Caco-2 (cell line): ENCODE measurements at regions of chr2 and their contacts with region 1.

Region 1: GRCh38 chr2:188512456-188512855 is 220.8 kb downstream of the GULP1 start:
- DNase-seq: peak in 1 of 2 experiments; percentile 17
- H3K4me3 ChIP-seq: no peak overlapping the region
- H3K4me3 Mint-ChIP-seq: no peak overlapping the region
- H3K27ac Mint-ChIP-seq: no peak overlapping the region
- H3K4me1 ChIP-seq: no peaks in the 10 kb centered on the region
- H3K4me1 Mint-ChIP-seq: no peaks in the 10 kb centered on the region
- H3K27me3 ChIP-seq: no peaks in the 10 kb centered on the region
- H3K27me3 Mint-ChIP-seq: no peaks in the 10 kb centered on the region
- CTCF ChIP-seq: peak; percentile 51 to 63

Region 2: GRCh38 chr2:187581125-187581896 is 931.1 kb before region 1 on chr2:
- CTCF ChIA-PET with region 1: interaction called, 3 read pairs
- POLR2A ChIA-PET with region 1: no interaction called
- intact Hi-C with region 1: loop called (anchors 1 kb)
- DNase-seq: peak in 1 of 2 experiments; percentile 62
- H3K4me3 ChIP-seq: no peak overlapping the region
- H3K4me3 Mint-ChIP-seq: no peak overlapping the region
- H3K27ac Mint-ChIP-seq: no peak overlapping the region
- H3K4me1 ChIP-seq: peaks cover 17% of the 10 kb centered on the region
- H3K4me1 Mint-ChIP-seq: no peaks in the 10 kb centered on the region
- H3K27me3 ChIP-seq: no peaks in the 10 kb centered on the region
- H3K27me3 Mint-ChIP-seq: peaks cover 4% of the 10 kb centered on the region
- CTCF ChIP-seq: peak; percentile 64 to 71

Region 3: DNA sequence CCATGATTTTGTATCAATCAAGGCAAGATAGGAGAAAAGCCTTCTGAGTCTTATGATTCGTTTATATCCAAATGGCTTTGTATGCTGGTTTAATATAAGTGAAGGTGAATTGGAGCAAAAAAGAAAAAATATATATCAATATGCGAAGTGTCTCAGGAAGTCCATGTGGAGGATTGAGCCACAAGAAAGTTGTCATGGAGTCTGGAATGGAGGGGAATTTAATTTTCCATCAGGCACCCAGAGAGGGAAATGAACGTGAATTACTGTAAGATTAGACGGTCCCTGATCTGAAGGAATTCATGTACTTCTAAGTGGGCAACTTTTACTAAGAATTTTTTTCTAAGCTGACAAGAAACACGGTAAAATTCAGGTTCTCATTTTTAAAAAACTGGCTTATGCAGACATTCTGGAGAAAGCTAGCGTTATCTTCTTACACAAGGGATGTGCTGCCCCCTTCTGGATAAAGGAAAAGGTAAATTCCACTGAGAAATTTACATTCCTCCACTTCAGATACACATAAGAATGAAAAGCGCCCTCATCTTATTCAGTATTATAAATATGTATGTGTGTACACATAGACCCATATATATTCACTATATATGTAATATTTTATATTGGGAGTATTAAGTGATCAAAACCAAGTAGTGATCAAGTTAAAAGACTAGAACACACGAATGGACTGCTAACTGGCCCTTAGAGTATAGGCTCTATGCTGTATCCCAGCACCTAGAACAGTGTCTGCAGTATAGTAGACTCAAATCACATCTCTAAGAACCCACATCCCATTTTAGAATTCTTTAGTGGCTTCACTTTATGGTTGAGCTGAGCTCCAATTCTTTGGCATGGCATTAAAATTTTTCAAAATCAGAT is 669.2 kb before region 1 on chr2:
- CTCF ChIA-PET with region 1: no interaction called
- POLR2A ChIA-PET with region 1: no interaction called
- intact Hi-C with region 1: loop called (anchors 2 kb)
- DNase-seq: peak in 1 of 2 experiments; percentile 65
- H3K4me3 ChIP-seq: no peak overlapping the region
- H3K4me3 Mint-ChIP-seq: no peak overlapping the region
- H3K27ac Mint-ChIP-seq: no peak overlapping the region
- H3K4me1 ChIP-seq: no peaks in the 10 kb centered on the region
- H3K4me1 Mint-ChIP-seq: peaks cover 7% of the 10 kb centered on the region
- H3K27me3 ChIP-seq: no peaks in the 10 kb centered on the region
- H3K27me3 Mint-ChIP-seq: no peaks in the 10 kb centered on the region
- CTCF ChIP-seq: peak; percentile 67 to 69

Region 4: DNA sequence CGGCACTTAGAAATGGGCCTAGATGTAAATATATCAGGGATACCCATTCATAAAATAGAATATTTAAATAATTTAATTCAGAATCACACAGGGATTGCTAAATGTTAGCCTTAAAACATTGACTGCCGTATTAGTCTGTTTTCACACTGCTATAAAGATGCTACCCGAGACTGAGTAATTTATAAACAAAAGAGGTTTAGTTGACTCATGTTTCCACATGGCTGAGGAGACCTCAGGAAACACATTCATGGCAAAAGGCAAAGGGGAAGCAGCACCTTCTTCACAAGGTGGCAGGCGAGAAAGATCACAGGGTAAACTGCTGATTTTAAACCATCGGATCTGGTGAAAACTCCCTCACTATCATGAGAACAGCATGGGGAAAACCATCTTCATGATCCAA is 444.4 kb before region 1 on chr2:
- CTCF ChIA-PET with region 1: no interaction called
- POLR2A ChIA-PET with region 1: no interaction called
- intact Hi-C with region 1: loop called (anchors 5 kb)
- DNase-seq: no peak
- H3K4me3 ChIP-seq: no peak overlapping the region
- H3K4me3 Mint-ChIP-seq: no peak overlapping the region
- H3K27ac Mint-ChIP-seq: no peak overlapping the region
- H3K4me1 ChIP-seq: no peaks in the 10 kb centered on the region
- H3K4me1 Mint-ChIP-seq: no peaks in the 10 kb centered on the region
- H3K27me3 ChIP-seq: no peaks in the 10 kb centered on the region
- H3K27me3 Mint-ChIP-seq: peaks cover 4% of the 10 kb centered on the region
- CTCF ChIP-seq: no peak

Region 5: DNA sequence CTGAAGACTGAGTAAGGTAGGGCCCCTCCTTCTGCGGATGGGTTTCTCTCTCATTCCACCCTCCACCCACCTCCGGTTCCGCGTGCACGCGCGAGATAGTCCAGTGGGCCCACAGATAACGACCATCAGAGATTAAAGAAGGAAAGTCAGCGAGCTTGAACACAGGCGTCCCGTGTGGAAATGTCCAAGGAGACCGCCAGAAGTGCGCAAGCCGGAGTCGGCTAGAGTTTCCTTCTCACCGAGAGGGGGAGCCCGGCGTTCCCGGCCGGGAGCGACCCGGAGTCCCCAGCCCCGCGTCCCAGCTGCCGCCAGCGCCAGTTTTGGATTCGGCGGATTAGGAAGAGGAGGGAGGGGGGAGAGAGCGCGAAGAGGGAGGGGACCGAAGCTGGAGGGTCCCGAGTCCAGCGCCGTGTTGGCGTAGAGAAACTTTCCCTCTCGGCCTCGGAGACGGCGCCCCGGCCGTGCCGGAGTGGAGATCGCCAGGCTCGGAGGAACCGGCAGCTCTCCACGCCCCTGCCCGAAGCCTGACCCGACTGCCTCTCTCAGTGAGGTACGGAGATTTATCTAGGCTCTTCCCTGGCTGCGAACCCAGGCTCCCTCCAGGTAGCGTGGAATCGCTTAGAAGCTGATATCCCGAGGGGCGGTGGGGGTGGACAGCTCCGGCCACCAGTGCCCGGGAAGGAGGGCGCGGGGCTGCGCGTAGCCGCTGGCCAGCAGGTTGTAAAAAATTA is 220.7 kb before region 1 on chr2 and contains the start of gene GULP1:
- CTCF ChIA-PET with region 1: no interaction called
- POLR2A ChIA-PET with region 1: no interaction called
- intact Hi-C with region 1: loop called (anchors 1 kb)
- DNase-seq: peak; percentile 82 to 85
- H3K4me3 ChIP-seq: peak within 1 kb of the TSS; percentile 92
- H3K4me3 Mint-ChIP-seq: peak within 1 kb of the TSS; percentile 94
- H3K27ac Mint-ChIP-seq: peak within 1 kb of the TSS; percentile 89
- H3K4me1 ChIP-seq: peaks cover 17% of the 10 kb centered on the region
- H3K4me1 Mint-ChIP-seq: no peaks in the 10 kb centered on the region
- H3K27me3 ChIP-seq: no peaks in the 10 kb centered on the region
- H3K27me3 Mint-ChIP-seq: no peaks in the 10 kb centered on the region
- CTCF ChIP-seq: peak; percentile 75 to 90
- total RNA-seq, gene GULP1: 32.4 and 33.0 TPM in 2 replicates

Region 6: DNA sequence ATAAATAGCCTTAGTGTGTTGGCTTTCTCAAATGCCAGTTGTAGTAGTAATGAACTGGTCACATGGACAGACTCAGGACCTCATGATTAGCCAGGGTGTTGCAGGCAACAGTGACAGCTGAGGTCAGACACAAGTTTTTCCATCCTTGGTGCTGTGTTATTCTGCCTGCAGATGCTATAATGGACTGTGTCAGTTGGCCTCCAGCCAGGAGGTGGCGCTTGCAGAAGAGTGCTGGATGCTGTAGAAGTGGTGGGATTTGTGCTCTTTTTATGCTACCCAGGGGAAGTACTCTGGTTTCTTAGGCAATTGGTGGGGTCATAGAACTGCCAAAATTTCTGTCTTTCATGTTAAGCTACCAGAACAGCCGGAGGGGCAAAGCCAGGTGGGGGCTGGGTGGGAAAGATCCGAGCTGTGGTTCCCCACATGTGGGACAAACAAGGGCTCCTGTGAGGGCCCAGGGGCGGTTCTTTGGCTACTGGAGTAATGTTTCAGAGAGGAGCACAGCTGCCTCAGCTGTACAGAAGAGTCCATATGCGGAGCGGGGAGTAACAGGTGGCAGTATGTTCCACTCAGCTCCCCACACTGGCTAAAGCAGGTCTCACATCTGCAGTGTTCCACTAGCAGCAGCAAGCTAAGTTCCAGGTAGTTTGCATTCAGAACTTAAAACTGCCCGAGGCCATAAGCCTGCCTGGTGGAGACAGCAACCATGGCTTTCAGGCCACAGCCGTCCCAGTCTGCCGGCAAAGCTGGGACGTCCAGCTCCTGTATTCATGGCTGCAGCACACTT is 116.4 kb before region 1 on chr2:
- CTCF ChIA-PET with region 1: no interaction called
- POLR2A ChIA-PET with region 1: no interaction called
- intact Hi-C with region 1: loop called (anchors 2 kb)
- DNase-seq: no peak
- H3K4me3 ChIP-seq: no peak overlapping the region
- H3K4me3 Mint-ChIP-seq: no peak overlapping the region
- H3K27ac Mint-ChIP-seq: no peak overlapping the region
- H3K4me1 ChIP-seq: no peaks in the 10 kb centered on the region
- H3K4me1 Mint-ChIP-seq: no peaks in the 10 kb centered on the region
- H3K27me3 ChIP-seq: no peaks in the 10 kb centered on the region
- H3K27me3 Mint-ChIP-seq: no peaks in the 10 kb centered on the region
- CTCF ChIP-seq: peak; percentile 21 to 30